Activated CD8-positive, alpha-beta T cell treated with anti-CD3 and anti-CD28 coated beads for 36 hours (primary cell): ENCODE measurements at regions of chr11 and their contacts with region 1.

Region 1: DNA sequence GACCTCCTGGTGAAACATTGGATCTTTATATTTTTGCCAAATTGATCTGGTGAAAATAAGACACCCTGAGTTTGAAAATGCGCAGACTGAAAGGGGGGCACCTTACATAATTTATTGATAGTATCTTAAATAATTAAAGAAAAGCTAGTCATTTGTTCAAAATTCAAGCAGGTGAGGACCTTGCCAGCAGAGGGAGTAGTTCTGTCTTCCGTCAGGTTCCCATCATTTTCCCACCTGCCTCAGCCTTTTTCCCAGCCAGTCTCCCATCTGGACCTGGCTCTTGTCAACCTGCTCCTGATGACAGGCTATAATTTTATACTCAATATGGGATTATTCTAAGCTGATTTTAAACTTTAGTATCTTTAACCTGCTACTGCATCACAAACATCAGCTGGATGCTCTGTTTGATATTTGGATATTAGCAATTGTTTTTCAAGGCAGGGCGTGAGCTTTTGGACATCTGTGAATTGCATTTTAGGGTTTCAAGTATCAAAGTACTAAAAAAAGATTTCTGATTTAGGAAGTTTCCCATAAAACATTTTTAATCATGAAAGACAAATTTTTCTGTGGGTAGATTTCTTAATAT is 132.0 kb downstream of the ELP4 start:
- DNase-seq: peak; percentile 1
- ATAC-seq: no peak
- H3K4me3 Mint-ChIP-seq: no peak overlapping the region
- H3K27ac Mint-ChIP-seq: no peak overlapping the region
- H3K4me1 Mint-ChIP-seq: no peaks in the 10 kb centered on the region
- H3K27me3 Mint-ChIP-seq: no peaks in the 10 kb centered on the region
- CTCF ChIP-seq: peak; percentile 53

Region 2: GRCh38 chr11:31628111-31628510 is 13.5 kb before region 1 on chr11:
- CTCF ChIA-PET with region 1: interaction called, 10 read pairs
- POLR2A ChIA-PET with region 1: no interaction called
- intact Hi-C with region 1: no loop called
- DNase-seq: no peak
- ATAC-seq: no peak
- H3K4me3 Mint-ChIP-seq: no peak overlapping the region
- H3K27ac Mint-ChIP-seq: no peak overlapping the region
- H3K4me1 Mint-ChIP-seq: no peaks in the 10 kb centered on the region
- H3K27me3 Mint-ChIP-seq: no peaks in the 10 kb centered on the region
- CTCF ChIP-seq: no peak

Region 3: GRCh38 chr11:31651822-31652221 is 10.3 kb after region 1 on chr11:
- CTCF ChIA-PET with region 1: interaction called, 10 read pairs
- POLR2A ChIA-PET with region 1: no interaction called
- intact Hi-C with region 1: no loop called
- DNase-seq: no peak
- ATAC-seq: no peak
- H3K4me3 Mint-ChIP-seq: no peak overlapping the region
- H3K27ac Mint-ChIP-seq: no peak overlapping the region
- H3K4me1 Mint-ChIP-seq: peaks cover 7% of the 10 kb centered on the region
- H3K27me3 Mint-ChIP-seq: no peaks in the 10 kb centered on the region
- CTCF ChIP-seq: no peak

Region 4: GRCh38 chr11:31747581-31747980 is 106.0 kb after region 1 on chr11:
- CTCF ChIA-PET with region 1: no interaction called
- POLR2A ChIA-PET with region 1: no interaction called
- intact Hi-C with region 1: no loop called
- DNase-seq: no peak
- ATAC-seq: no peak
- H3K4me3 Mint-ChIP-seq: no peak overlapping the region
- H3K27ac Mint-ChIP-seq: no peak overlapping the region
- H3K4me1 Mint-ChIP-seq: no peaks in the 10 kb centered on the region
- H3K27me3 Mint-ChIP-seq: no peaks in the 10 kb centered on the region
- CTCF ChIP-seq: no peak